PC-9 (cell line): ENCODE measurements at regions of chr1 and their contacts with region 1.

Region 1: DNA sequence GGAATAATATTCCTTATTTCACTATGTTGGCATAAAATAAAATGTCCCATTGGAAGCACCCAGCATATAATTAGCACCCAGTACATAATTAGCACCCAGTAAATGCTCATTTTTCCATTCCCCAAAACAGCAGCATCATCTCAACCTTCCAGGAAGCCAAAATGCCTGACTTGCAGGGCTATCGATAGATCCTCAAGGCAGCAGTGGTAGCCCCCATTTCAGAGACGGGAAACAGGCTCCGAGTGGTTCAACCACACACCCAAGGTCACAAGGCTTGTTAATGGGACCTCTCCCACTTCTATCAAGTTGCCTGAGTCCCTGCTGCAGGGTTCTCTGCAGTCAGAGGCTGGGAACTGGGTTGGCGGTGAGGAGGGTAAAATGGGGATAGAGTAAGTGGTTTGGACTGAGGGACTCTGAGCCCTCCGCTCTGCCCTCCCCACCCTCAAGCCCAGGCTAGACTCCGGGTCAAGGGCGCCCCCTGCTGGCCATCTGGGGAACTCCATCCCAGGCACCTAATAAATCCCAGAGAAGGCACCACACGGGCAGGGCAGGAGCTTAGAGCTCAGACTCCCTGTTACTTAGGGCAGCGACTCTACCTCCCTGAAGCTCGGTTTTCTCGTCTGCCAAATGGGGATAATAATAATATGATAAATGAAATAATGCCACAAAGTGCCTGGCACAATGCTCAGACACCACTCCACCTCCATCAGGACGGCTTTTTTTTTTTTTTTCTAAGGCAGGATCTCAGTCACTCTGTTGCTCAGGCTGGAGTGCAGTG is 21.9 kb upstream of the LAPTM5 start:
- DNase-seq: peak; percentile 38 to 87
- H3K4me3 ChIP-seq: no peak overlapping the region
- H3K27ac ChIP-seq: no peak overlapping the region
- H3K4me1 ChIP-seq: peaks cover 10% of the 10 kb centered on the region; the same call in 1 of the 2 replicates
- H3K27me3 ChIP-seq: no peaks in the 10 kb centered on the region
- CTCF ChIP-seq: peak; percentile 96

Region 2: DNA sequence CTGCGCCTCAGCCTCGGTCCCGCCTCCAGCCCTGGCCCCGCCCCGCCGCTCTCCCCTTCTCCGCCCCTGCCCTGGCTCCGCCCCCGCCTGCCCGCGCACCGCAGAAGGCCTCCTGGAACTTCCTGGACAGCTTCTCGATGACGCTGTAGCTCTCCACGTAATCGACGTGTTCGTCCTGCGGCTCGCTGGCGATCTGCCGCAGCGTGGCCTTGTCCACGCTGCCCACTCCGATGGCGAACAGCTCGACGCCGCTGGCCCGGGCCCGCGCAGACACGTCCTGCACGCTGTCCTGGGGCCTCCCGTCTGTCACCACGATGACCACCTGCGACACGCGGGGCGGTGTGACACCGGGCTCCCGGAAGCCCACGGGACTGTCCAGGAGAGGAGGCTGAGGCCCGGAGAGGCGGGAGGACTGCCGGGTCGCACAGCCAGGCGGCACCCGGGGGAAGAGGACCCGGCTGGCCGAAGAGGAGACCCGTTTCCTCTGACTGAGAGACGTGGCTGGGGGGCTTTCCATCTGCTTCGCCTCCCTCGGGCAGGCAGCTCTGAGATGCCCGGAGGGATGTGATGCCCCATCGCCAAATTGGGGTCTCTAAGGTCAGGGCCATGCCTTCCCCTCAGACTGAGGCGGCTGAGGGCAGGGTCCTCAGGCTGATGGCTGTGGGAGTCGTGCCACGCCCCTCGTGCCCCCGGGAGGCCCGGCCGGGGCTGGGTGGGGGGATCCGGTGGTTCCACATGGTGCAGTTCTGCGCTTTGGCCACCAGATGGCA is 60.7 kb before region 1 on chr1:
- CTCF ChIA-PET with region 1: interaction called, 84 read pairs
- POLR2A ChIA-PET with region 1: interaction called, 4 read pairs
- intact Hi-C with region 1: loop called (anchors 1 kb)
- DNase-seq: peak; percentile 79 to 96
- H3K4me3 ChIP-seq: peak overlapping the region; percentile 77
- H3K27ac ChIP-seq: peak overlapping the region; percentile 83
- H3K4me1 ChIP-seq: 0 out of 2 replicates have a peak, but pooled peaks cover 5% of the 10 kb centered on the region
- H3K27me3 ChIP-seq: no peaks in the 10 kb centered on the region
- CTCF ChIP-seq: peak; percentile 95

Region 3: DNA sequence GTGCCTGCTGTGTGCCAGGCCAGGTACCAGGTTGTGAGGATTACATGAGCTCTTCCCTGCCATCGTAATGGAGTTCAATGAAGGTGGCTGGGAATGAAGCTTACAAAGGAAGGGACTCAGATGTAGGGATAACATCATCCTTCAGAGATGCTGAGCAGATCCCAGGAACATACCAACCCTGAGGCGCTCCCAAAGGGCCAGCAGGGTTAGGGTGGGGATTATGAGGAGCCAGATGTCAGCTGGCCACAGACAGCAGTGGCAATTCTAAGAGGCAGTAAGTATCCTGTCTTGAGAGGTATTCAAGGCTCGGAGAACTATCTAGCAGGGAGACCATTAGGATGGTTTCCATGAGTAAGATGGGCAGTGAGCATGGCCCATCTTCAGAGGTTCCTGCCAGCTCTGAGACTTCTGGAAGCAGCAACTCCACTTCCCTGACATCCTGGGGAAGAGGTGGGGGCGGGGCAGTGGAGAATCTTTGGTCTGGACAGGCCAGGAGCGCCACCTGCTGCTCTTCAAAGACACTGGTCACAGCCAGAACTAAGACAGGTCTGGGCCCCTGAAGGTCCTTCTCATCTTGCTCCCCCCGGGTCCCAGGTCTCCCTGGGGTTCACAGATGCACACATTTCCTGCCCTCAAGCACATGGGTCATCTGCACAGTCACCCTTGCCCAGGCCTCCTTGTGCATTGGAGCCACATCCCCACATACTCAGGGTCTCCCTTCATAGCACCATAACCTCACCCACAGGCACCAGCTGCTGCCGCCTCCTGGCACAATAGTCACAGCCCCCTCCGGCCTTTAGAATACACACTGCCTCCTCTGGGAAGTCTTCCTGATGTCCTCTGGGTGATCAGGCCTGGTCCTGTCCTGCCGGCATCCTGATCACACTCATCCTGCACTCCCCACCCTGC is 131.8 kb after region 1 on chr1:
- CTCF ChIA-PET with region 1: interaction called, 19 read pairs
- POLR2A ChIA-PET with region 1: no interaction called
- intact Hi-C with region 1: loop called (anchors 1 kb)
- DNase-seq: peak; percentile 41 to 74
- H3K4me3 ChIP-seq: no peak overlapping the region
- H3K27ac ChIP-seq: no peak overlapping the region
- H3K4me1 ChIP-seq: peaks cover 17% of the 10 kb centered on the region
- H3K27me3 ChIP-seq: no peaks in the 10 kb centered on the region
- CTCF ChIP-seq: peak; percentile 82

Region 4: DNA sequence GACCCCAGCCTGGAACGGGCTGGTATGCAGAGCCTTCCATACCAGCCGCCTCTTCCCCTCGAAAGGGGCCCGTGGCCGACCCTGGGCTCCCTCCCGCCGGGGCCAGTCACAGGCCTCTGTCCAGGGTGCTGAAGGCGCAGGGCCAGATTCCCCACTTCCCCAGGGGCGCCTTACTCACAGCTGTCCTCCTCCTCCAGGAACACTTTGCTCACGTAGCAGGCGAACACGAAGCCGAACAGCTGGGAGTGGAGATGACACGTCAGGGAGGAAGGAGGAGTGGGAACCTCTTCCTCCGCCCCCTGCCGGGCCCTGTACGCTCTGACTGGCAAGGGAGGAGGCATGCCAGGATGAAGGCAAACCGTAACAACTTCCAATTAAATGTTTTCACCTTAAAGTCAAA is 402.9 kb after region 1 on chr1:
- CTCF ChIA-PET with region 1: no interaction called
- POLR2A ChIA-PET with region 1: no interaction called
- intact Hi-C with region 1: loop called (anchors 5 kb)
- DNase-seq: peak; percentile 73 to 77
- H3K4me3 ChIP-seq: no peak overlapping the region; the same call in 1 of the 2 replicates
- H3K27ac ChIP-seq: no peak overlapping the region
- H3K4me1 ChIP-seq: no peaks in the 10 kb centered on the region
- H3K27me3 ChIP-seq: no peaks in the 10 kb centered on the region
- CTCF ChIP-seq: peak; percentile 52